ENCODE measurements at regions of chr10 and their contacts with region 1.

Region 1: DNA sequence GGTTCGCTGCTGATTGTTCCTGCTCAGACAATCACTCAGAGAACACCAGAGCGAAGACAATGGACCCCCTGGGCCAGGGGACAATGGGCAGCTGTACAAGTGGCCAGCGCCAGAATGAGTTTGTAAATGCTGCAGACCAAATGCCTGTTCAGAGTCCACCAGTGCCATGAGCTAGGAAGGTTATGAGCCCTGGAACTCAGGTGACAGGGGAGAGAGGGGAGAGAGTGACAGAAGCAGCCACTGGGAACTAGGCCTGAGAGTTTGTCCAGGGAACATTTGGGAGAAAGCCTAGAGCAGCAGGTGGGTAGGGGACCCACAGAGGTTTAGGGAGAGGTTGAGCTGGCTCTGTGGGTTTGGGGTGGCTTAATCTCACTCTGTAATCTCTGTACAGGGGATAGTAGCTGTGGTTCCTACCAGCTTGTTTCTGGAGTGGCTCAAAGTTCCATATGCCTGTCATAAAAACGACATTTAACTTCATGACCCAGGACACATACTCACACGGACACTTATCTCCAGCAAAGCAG is 60.4 kb downstream of the C10orf105 start:
- DNase-seq: no peak
- ATAC-seq: peak; percentile 4; the same call in 1 of the 2 replicates
- H3K4me3 Mint-ChIP-seq: no peak overlapping the region
- H3K27ac Mint-ChIP-seq: no peak overlapping the region
- H3K4me1 Mint-ChIP-seq: peaks cover 80% of the 10 kb centered on the region
- H3K27me3 Mint-ChIP-seq: peaks cover 64% of the 10 kb centered on the region
- CTCF ChIP-seq: no peak

Region 2: GRCh38 chr10:71647526-71648253 is 11.5 kb before region 1 on chr10:
- CTCF ChIA-PET with region 1: interaction called, 11 read pairs
- POLR2A ChIA-PET with region 1: no interaction called
- DNase-seq: peak; percentile 69
- ATAC-seq: peak; percentile 86
- H3K4me3 Mint-ChIP-seq: no peak overlapping the region
- H3K27ac Mint-ChIP-seq: no peak overlapping the region
- H3K4me1 Mint-ChIP-seq: peaks cover 38% of the 10 kb centered on the region
- H3K27me3 Mint-ChIP-seq: peaks cover 3% of the 10 kb centered on the region; the same call in 1 of the 2 replicates
- CTCF ChIP-seq: peak; percentile 48; the same call in 1 of the 2 replicates

Region 3: DNA sequence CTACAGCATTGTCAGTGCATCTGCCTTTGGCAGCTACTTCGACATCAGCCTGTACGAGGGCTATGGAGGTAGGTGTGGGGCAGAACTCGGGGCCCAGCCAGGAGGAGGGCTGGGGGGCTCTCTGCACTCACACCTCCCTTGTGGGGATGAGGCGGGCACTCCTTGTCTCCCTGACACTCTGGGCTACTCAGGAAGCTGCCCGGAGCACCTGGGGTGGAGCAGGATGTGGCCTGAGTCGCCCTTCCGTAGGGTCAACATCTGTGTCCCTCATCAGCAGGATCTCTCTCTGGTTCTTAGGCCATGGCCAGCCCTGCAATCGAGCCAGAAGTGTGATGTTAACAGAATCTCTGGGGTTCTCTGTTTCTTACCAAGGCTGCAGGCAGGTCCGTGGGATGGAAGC is 20.3 kb after region 1 on chr10:
- CTCF ChIA-PET with region 1: no interaction called
- POLR2A ChIA-PET with region 1: no interaction called
- DNase-seq: no peak
- ATAC-seq: no peak
- H3K4me3 Mint-ChIP-seq: no peak overlapping the region
- H3K27ac Mint-ChIP-seq: no peak overlapping the region
- H3K4me1 Mint-ChIP-seq: peaks cover 4% of the 10 kb centered on the region
- H3K27me3 Mint-ChIP-seq: no peaks in the 10 kb centered on the region; the same call in 1 of the 2 replicates
- CTCF ChIP-seq: no peak

Region 4: GRCh38 chr10:71753091-71753959 is 94.2 kb after region 1 on chr10:
- CTCF ChIA-PET with region 1: no interaction called
- POLR2A ChIA-PET with region 1: no interaction called
- DNase-seq: no peak
- ATAC-seq: no peak
- H3K4me3 Mint-ChIP-seq: no peak overlapping the region
- H3K27ac Mint-ChIP-seq: no peak overlapping the region
- H3K4me1 Mint-ChIP-seq: peaks cover 27% of the 10 kb centered on the region
- H3K27me3 Mint-ChIP-seq: no peaks in the 10 kb centered on the region
- CTCF ChIP-seq: no peak